ENCODE measurements at regions of chr11 and their contacts with region 1.

Region 1: DNA sequence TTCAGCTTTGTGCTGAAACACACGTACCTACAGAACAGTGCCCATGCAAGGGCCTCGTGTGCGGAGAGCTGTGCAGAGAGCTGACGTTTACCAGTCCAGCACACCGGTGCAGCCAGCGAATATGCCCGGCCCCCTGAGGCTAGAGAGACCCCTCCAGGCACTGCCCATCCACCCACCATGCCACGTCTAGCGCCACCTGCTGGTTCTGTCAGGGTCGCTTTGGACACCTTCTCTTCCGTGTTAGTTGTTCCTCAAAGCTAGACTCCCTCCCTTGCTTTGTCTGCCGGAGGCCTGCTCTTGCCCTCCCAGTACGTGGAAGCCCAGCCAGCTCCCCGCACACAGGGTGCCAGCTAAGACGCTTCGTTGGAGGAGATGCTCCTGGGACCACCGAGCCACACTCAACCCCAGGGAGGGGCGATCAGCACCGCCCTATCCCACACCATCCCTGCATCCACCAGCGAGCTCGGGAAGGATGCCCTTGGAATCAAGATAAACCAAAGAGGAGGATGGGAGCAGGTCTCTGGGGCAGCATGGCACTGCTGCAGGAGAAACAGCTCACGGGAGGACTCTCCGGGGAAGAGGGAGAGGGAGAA is 43.4 kb downstream of the CPT1A start:
- DNase-seq: peak; percentile 10
- H3K4me3 ChIP-seq: no peak overlapping the region
- H3K27ac ChIP-seq: no peak overlapping the region
- H3K4me1 ChIP-seq: no peaks in the 10 kb centered on the region
- H3K27me3 ChIP-seq: no peaks in the 10 kb centered on the region
- CTCF ChIP-seq: peak; percentile 72
- POLR2A ChIP-seq: no peak

Region 2: GRCh38 chr11:68488623-68489022 is 309.7 kb before region 1 on chr11:
- CTCF ChIA-PET with region 1: no interaction called
- POLR2A ChIA-PET with region 1: no interaction called
- dilution Hi-C with region 1: no loop called
- intact Hi-C with region 1: no loop called
- DNase-seq: no peak
- H3K4me3 ChIP-seq: no peak overlapping the region
- H3K27ac ChIP-seq: no peak overlapping the region
- H3K4me1 ChIP-seq: no peaks in the 10 kb centered on the region
- H3K27me3 ChIP-seq: no peaks in the 10 kb centered on the region
- CTCF ChIP-seq: no peak
- POLR2A ChIP-seq: no peak

Region 3: DNA sequence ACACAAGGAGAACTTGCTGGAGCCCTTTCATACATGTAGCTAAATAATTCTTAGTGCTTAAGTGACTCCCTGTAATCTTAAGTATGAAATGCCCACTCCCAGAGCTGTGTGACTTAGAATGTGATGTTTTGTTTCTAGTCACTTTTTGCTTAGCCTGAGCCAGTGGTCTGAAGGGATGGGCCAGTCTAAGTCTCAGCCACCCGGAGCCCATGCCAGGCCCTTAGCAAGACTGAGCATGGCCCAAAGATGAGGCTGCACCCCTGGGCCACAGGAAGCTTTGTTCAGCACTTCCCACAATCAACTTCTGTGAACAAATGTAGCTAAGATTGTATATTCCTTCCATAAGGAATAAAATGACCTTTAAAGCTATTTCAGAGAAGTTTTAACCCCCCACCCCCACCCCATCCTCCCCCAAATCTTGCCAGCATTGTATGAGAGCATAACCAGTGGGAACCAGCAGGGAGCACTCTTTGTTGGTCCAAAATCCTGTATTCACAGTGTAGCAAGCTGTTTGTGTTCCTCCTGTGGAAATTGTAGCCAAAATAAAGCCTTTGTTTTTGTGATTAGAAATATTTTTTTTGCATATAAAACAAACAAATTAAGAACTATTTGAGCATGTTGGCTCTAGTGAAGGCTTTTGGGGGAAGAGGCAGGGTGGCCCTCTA is 187.7 kb before region 1 on chr11:
- CTCF ChIA-PET with region 1: interaction called, 11 read pairs
- POLR2A ChIA-PET with region 1: no interaction called
- dilution Hi-C with region 1: no loop called
- intact Hi-C with region 1: no loop called
- DNase-seq: no peak
- H3K4me3 ChIP-seq: no peak overlapping the region
- H3K27ac ChIP-seq: no peak overlapping the region
- H3K4me1 ChIP-seq: no peaks in the 10 kb centered on the region
- H3K27me3 ChIP-seq: no peaks in the 10 kb centered on the region
- CTCF ChIP-seq: peak; percentile 5 to 17
- POLR2A ChIP-seq: no peak

Region 4: GRCh38 chr11:68666849-68667248 is 131.5 kb before region 1 on chr11:
- CTCF ChIA-PET with region 1: no interaction called
- POLR2A ChIA-PET with region 1: no interaction called
- dilution Hi-C with region 1: no loop called
- intact Hi-C with region 1: no loop called
- DNase-seq: no peak
- H3K4me3 ChIP-seq: no peak overlapping the region
- H3K27ac ChIP-seq: no peak overlapping the region
- H3K4me1 ChIP-seq: no peaks in the 10 kb centered on the region
- H3K27me3 ChIP-seq: no peaks in the 10 kb centered on the region
- CTCF ChIP-seq: no peak
- POLR2A ChIP-seq: no peak

Region 5: GRCh38 chr11:68780829-68781228 is 17.5 kb before region 1 on chr11:
- CTCF ChIA-PET with region 1: interaction called, 13 read pairs
- POLR2A ChIA-PET with region 1: no interaction called
- dilution Hi-C with region 1: no loop called
- intact Hi-C with region 1: no loop called
- DNase-seq: peak; percentile 50
- H3K4me3 ChIP-seq: no peak overlapping the region
- H3K27ac ChIP-seq: no peak overlapping the region
- H3K4me1 ChIP-seq: no peaks in the 10 kb centered on the region
- H3K27me3 ChIP-seq: no peaks in the 10 kb centered on the region
- CTCF ChIP-seq: no peak
- POLR2A ChIP-seq: no peak